ENCODE measurements at regions of chr10 and their contacts with region 1.

Region 1: GRCh38 chr10:32346134-32346550 is 816 bp downstream of the EPC1 start:
- DNase-seq: peak in 8 of 9 donors; percentile 93 to 98 (median 97)
- ATAC-seq: peak; percentile 92
- H3K4me3 ChIP-seq: peak overlapping the region; percentile 98
- H3K4me3 Mint-ChIP-seq: peak overlapping the region; percentile 86 to 97 (median 93)
- H3K27ac ChIP-seq: peak overlapping the region; percentile 99
- H3K27ac Mint-ChIP-seq: peak overlapping the region; percentile 99 to 100 (median 100)
- H3K4me1 ChIP-seq: peaks cover 42 to 50% of the 10 kb centered on the region in 2 donors
- H3K4me1 Mint-ChIP-seq: peaks cover 35 to 77% (median 73%) of the 10 kb centered on the region in 7 donors
- H3K27me3 ChIP-seq: no peaks in the 10 kb centered on the region
- H3K27me3 Mint-ChIP-seq: no peaks in the 10 kb centered on the region

Region 2: GRCh38 chr10:30701451-30702173 is 1644.5 kb before region 1 on chr10:
- CTCF ChIA-PET with region 1: no interaction called
- POLR2A ChIA-PET with region 1: no interaction called
- intact Hi-C with region 1: loop called in 1 of 2 experiments (anchors 10 kb)
- DNase-seq: peak in 8 of 9 donors; percentile 68 to 81 (median 74)
- ATAC-seq: peak; percentile 80
- H3K4me3 ChIP-seq: peak overlapping the region; percentile 31
- H3K4me3 Mint-ChIP-seq: peak overlapping the region; percentile 68 to 98 (median 88)
- H3K27ac ChIP-seq: peak overlapping the region; percentile 86
- H3K27ac Mint-ChIP-seq: peak overlapping the region; percentile 88 to 98 (median 96)
- H3K4me1 ChIP-seq: peaks cover 63 to 74% of the 10 kb centered on the region in 2 donors
- H3K4me1 Mint-ChIP-seq: peaks cover 51 to 97% (median 88%) of the 10 kb centered on the region in 7 donors
- H3K27me3 ChIP-seq: no peaks in the 10 kb centered on the region
- H3K27me3 Mint-ChIP-seq: no peaks in the 10 kb centered on the region

Region 3: DNA sequence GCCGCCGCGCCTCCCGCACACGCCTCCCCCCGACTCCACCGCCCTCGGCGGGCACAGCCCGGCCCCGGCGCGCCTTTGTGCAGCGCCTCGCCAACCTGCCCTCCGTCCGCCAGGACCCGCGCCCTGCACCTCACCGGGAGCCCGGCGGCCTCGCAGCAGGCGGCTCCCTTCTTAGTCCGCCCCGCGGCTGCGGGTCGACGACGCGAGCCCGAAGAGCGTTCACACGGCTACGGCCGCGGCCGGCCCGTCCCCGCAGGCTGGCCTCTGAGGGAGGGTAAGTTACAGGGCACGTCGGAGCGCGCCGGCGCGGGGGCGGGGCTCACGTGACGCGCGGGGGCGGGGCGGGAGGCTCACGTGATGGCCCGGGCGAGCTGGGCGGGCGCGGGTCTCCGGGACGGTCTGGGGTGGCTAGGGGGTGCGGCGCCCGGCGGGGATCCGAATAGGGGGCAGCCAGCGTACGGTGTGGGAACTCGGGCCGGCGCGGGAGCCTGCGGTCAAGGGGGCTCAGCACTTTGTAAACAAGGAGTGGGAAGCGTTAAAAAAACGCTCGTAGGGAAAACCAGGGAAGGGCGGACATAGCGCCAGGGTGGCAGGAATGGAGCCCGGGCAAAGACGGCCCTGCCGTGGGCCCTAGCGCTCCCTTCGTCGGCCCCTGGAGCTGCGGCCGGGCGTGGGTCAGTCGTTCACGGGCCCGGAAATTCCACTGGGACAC is 417.4 kb before region 1 on chr10 and contains the start of gene ARHGAP12:
- CTCF ChIA-PET with region 1: no interaction called
- POLR2A ChIA-PET with region 1: no interaction called
- intact Hi-C with region 1: loop called (anchors 1 kb)
- DNase-seq: peak; percentile 76 to 90 (median 85)
- ATAC-seq: peak; percentile 87
- H3K4me3 ChIP-seq: peak within 1 kb of the TSS; percentile 90
- H3K4me3 Mint-ChIP-seq: peak within 1 kb of the TSS; percentile 73 to 95 (median 92)
- H3K27ac ChIP-seq: peak within 1 kb of the TSS; percentile 84
- H3K27ac Mint-ChIP-seq: peak within 1 kb of the TSS; percentile 66 to 93 (median 86)
- H3K4me1 ChIP-seq: peaks cover 10% of the 10 kb centered on the region in 2 donors
- H3K4me1 Mint-ChIP-seq: peaks cover 30 to 51% (median 47%) of the 10 kb centered on the region in 7 donors
- H3K27me3 ChIP-seq: no peaks in the 10 kb centered on the region
- H3K27me3 Mint-ChIP-seq: peaks cover 0 to 9% (median 0%) of the 10 kb centered on the region in 5 donors
- total RNA-seq, gene ARHGAP12: 10.6 to 34.6 (median 31.4) TPM

Region 4: GRCh38 chr10:32256613-32257437 is 89.3 kb before region 1 on chr10:
- CTCF ChIA-PET with region 1: interaction called, 9 read pairs
- POLR2A ChIA-PET with region 1: interaction called, 3 read pairs
- intact Hi-C with region 1: loop called (anchors 1 kb)
- DNase-seq: peak; percentile 31 to 67 (median 57)
- ATAC-seq: peak; percentile 89
- H3K4me3 ChIP-seq: no peak overlapping the region
- H3K4me3 Mint-ChIP-seq: peak overlapping the region in 1 of 10 donors; percentile 60
- H3K27ac ChIP-seq: no peak overlapping the region
- H3K27ac Mint-ChIP-seq: peak overlapping the region in 1 of 9 donors; percentile 51
- H3K4me1 ChIP-seq: peaks cover 0 to 5% of the 10 kb centered on the region in 2 donors
- H3K4me1 Mint-ChIP-seq: peaks cover 1 to 13% (median 5%) of the 10 kb centered on the region in 7 donors
- H3K27me3 ChIP-seq: no peaks in the 10 kb centered on the region
- H3K27me3 Mint-ChIP-seq: no peaks in the 10 kb centered on the region

Region 5: GRCh38 chr10:32357056-32357735 is 11.1 kb after region 1 on chr10:
- CTCF ChIA-PET with region 1: interaction called, 3 read pairs
- POLR2A ChIA-PET with region 1: interaction called, 6 read pairs
- intact Hi-C with region 1: loop called (anchors 1 kb)
- DNase-seq: peak in 7 of 9 donors; percentile 29 to 63 (median 48)
- ATAC-seq: peak; percentile 83
- H3K4me3 ChIP-seq: peak overlapping the region; percentile 26
- H3K4me3 Mint-ChIP-seq: peak overlapping the region; percentile 48 to 84 (median 65)
- H3K27ac ChIP-seq: peak overlapping the region; percentile 47
- H3K27ac Mint-ChIP-seq: peak overlapping the region; percentile 51 to 94 (median 90)
- H3K4me1 ChIP-seq: peaks cover 31 to 43% of the 10 kb centered on the region in 2 donors
- H3K4me1 Mint-ChIP-seq: peaks cover 39 to 91% (median 79%) of the 10 kb centered on the region in 7 donors
- H3K27me3 ChIP-seq: no peaks in the 10 kb centered on the region
- H3K27me3 Mint-ChIP-seq: no peaks in the 10 kb centered on the region

Region 6: DNA sequence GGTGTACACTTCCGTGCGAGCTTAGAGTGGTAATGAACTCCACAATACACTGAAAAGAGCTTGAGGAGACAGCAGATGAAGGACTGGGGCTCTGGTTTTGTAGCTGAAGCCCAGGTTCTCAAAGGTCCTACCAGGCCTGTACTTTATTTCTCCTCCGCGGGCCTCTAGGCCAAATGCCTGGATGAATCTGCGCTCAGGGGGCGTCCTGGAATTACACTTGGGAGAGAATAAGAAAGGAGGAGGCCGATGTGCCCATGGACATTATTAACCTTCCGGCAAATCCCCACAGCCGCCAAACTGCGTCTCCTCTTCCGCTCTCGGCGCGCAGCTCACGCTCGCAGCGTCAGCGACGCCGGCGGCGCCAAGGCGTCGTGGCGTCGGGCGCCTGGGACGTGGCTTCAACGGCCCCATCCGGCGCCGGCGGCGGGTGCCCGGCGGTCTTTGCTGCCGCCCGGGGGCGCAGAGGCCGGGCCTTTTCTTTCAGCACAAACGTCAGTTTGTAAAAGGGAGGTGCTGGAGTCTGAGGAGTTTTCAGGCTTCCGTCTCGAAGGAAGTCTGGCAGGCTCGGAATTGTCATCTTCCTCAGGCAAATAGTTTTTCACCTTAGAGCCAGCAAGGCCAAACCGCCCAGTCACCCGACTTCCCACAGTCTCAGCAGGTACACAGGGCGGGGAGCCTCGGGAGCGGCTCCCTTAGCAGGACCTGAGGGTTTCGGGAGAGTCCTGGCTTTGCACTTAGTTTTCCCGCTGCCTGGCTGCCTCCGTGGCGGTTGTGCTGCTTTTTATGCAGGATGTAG is 99.8 kb after region 1 on chr10 and contains the start of gene CCDC7:
- CTCF ChIA-PET with region 1: interaction called, 3 read pairs
- POLR2A ChIA-PET with region 1: interaction called, 15 read pairs
- intact Hi-C with region 1: loop called (anchors 1 kb)
- DNase-seq: peak; percentile 78 to 90 (median 88)
- ATAC-seq: peak; percentile 98
- H3K4me3 ChIP-seq: peak within 1 kb of the TSS; percentile 79
- H3K4me3 Mint-ChIP-seq: peak within 1 kb of the TSS; percentile 85 to 98 (median 94)
- H3K27ac ChIP-seq: peak within 1 kb of the TSS; percentile 95
- H3K27ac Mint-ChIP-seq: peak within 1 kb of the TSS; percentile 96 to 100 (median 99)
- H3K4me1 ChIP-seq: peaks cover 8 to 9% of the 10 kb centered on the region in 2 donors
- H3K4me1 Mint-ChIP-seq: peaks cover 2 to 35% (median 25%) of the 10 kb centered on the region in 7 donors
- H3K27me3 ChIP-seq: no peaks in the 10 kb centered on the region
- H3K27me3 Mint-ChIP-seq: peaks cover 0 to 4% (median 0%) of the 10 kb centered on the region in 5 donors
- total RNA-seq, gene CCDC7: 19.5 to 98.7 (median 69.5) TPM

Region 7: GRCh38 chr10:32958085-32959005 is 612.2 kb after region 1 on chr10 and contains the start of gene ITGB1:
- CTCF ChIA-PET with region 1: no interaction called
- POLR2A ChIA-PET with region 1: no interaction called
- intact Hi-C with region 1: loop called (anchors 1 to 10 kb)
- DNase-seq: peak; percentile 73 to 91 (median 82)
- ATAC-seq: peak; percentile 95
- H3K4me3 ChIP-seq: peak within 1 kb of the TSS; percentile 88
- H3K4me3 Mint-ChIP-seq: peak within 1 kb of the TSS; percentile 78 to 95 (median 88)
- H3K27ac ChIP-seq: peak within 1 kb of the TSS; percentile 68
- H3K27ac Mint-ChIP-seq: peak within 1 kb of the TSS; percentile 74 to 90 (median 82)
- H3K4me1 ChIP-seq: peaks cover 7 to 8% of the 10 kb centered on the region in 2 donors
- H3K4me1 Mint-ChIP-seq: peaks cover 29 to 60% (median 54%) of the 10 kb centered on the region in 7 donors
- H3K27me3 ChIP-seq: no peaks in the 10 kb centered on the region
- H3K27me3 Mint-ChIP-seq: peaks cover 0 to 13% (median 0%) of the 10 kb centered on the region in 5 donors
- total RNA-seq, gene ITGB1: 43.2 to 205 (median 60.8) TPM